ENCODE measurements at regions of chr7 and their contacts with region 1.

Region 1: DNA sequence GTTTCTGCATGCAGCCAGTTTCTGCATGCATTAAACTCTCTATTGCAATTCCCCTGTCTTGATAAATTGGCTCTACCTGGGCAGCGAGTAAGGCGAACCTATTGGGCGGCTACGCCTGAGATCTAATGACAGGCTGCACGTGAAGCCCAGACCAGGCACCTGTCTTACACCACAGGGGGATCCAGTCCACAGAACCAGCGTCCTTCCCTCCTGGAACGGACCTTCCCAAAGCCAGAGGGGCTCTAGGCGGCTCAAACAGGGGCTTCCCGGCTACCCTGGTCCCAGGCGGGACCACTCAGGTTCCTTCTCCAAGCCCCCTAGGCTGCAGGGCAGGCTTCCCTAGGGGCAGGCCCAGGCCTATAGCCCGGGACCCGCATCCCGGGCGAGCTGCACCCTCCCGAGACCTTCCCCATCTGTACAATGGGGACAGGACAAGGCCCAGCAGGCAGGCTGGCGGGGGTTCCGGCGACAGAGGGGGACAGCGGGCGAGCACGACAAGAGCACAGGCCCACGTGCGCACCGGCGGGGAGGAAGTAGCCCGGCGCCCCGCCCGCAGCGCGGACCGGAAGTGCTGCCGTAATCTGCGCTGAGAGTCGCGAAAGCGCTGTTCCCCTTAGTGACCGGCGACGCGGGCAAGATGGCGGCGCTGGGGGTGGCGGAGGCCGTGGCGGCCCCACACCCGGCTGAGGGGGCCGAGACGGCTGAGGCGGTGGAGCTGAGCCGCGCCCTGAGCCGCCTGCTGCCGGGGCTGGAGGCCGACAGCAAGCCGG is at the start of gene DNAAF5:
- DNase-seq: peak; percentile 91
- ATAC-seq: peak; percentile 94
- total RNA-seq, gene DNAAF5: 14.9 to 15.0 TPM

Region 2: DNA sequence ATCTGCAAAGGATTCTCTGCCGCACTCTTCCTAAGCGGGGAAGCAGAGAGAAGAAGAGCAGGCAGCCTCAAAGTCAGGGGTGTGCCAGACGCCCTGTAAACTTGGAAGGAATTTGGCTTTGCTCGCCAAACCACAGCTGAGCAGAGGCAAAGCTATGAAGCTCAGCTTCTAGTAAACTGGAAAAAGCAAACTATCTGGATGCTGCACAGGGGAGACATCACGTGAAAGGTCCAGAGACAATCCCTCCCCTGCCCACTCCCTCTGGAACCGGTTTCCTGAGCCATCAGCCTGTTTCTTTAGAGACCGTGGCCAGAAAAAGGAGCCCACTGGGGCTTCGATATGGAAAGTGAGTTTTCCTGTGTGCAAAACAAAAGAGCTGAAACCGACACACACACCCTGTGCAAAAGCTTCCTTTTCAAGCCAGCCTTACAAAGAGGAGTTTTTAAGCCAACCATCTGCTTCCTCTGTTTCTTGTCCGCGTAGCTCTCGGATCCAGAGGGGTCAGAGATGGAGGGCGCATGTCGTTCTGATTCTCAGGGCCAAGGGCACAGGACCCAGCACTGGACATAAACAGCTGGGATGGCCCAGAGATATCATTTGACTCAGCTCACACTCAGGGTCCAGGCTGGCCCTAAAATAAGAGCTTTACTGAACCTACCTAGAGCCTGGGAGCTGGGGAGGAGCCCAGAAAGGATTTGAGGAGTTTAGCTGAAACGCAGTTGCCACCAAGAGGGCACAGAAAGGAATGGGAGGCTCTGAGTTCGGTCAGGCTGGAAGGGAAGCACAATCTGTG is 57.9 kb before region 1 on chr7:
- intact Hi-C with region 1: loop called in 1 of 2 experiments (anchors 5 kb)
- DNase-seq: no peak
- ATAC-seq: peak; percentile 21 to 57